Aorta (tissue), 5 donors: ENCODE measurements at regions of chr3 and their contacts with region 1.

Region 1: GRCh38 chr3:73848173-73848906 is 223.6 kb upstream of the PDZRN3 start:
- DNase-seq: no peak
- ATAC-seq: no peak
- H3K4me3 ChIP-seq: no peak overlapping the region
- H3K27ac ChIP-seq: no peak overlapping the region
- H3K4me1 ChIP-seq: no peaks in the 10 kb centered on the region
- H3K27me3 ChIP-seq: no peaks in the 10 kb centered on the region

Region 2: GRCh38 chr3:73508330-73508954 is 339.9 kb before region 1 on chr3:
- intact Hi-C with region 1: loop called (anchors 1 to 5 kb)
- DNase-seq: no peak
- ATAC-seq: peak; percentile 76
- H3K4me3 ChIP-seq: no peak overlapping the region
- H3K27ac ChIP-seq: peak overlapping the region; percentile 64 to 78
- H3K4me1 ChIP-seq: peaks cover 6 to 24% of the 10 kb centered on the region in 2 donors
- H3K27me3 ChIP-seq: no peaks in the 10 kb centered on the region

Region 3: GRCh38 chr3:73520865-73521461 is 327.4 kb before region 1 on chr3:
- intact Hi-C with region 1: loop called in 1 of 2 experiments (anchors 5 kb)
- DNase-seq: peak in 1 of 2 donors; percentile 71
- ATAC-seq: peak; percentile 85
- H3K4me3 ChIP-seq: no peak overlapping the region
- H3K27ac ChIP-seq: peak overlapping the region; percentile 62 to 87
- H3K4me1 ChIP-seq: peaks cover 7 to 8% of the 10 kb centered on the region in 2 donors
- H3K27me3 ChIP-seq: no peaks in the 10 kb centered on the region

Region 4: DNA sequence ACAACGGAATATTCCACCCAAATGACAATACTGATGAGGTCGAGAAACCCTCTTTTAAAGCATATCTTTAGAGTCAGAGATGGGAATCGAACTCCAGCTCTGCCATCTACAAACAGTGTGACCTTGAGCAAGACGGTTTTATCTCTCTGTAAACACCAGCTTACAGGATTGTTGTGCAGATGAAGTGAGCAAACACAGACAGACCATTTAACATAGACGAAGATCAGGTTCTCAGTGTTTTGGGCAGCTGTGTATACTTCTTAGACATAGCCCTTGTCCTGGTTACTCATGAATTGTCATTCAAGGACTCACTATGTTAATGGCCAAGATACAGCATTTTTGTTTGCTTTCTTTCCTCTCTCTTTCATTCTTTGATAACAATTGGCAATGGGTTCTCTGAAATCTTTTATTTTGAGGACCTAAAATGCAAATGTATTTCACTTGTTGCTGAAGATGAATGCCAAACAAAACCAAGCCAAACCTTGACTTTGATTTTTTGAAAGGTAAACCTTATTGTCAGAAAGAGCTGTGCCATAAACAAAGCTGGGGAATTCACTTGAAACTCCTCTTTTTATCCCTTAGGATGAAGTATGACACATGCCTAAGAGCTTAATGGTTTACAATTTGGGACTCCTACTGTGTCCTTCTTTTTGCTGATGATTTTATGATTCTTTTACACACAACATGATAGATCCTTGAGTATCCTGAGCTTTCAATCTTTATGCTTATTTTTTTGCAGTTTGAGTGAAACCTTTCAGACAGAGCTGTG is 26.4 kb after region 1 on chr3:
- intact Hi-C with region 1: no loop called
- DNase-seq: no peak
- ATAC-seq: no peak
- H3K4me3 ChIP-seq: no peak overlapping the region
- H3K27ac ChIP-seq: no peak overlapping the region
- H3K4me1 ChIP-seq: no peaks in the 10 kb centered on the region
- H3K27me3 ChIP-seq: no peaks in the 10 kb centered on the region